ENCODE measurements at regions of chr14 and their contacts with region 1.

Region 1: DNA sequence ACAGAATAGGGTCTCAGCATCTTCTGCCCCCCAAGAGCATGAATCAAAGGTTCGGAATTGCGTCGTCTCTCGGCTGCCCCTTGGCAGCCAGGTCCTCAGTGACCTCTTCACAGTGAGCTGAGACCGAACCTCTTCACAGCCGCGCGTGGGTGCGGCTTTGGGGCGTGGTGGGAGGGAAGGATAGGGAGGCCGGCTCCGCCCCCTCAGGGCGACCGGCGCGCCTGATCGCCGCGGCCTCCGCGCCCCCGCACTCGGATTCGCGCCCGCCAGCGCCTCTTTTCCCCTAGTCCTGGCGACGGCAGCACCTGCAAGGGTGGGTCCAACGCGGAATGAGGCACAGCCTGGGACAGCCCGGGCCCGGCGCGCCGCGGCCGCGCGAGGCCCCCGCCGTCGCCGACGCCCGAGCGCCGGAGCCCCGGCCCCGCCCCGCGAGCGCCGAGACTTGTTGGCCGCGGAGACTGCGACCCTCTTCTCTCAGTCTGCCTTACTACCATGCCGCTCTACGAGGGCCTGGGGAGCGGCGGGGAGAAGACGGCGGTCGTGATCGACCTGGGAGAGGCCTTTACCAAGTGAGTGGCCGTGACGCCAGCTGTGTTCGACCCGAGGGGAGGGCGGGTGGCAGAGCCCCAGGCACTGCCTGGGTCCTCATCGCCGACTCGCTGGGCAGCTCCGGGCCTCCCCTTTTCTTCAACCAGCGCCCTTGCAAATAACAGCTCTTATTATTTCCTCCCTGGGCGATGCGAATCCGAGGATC is at the start of gene ACTR10:
- DNase-seq: peak; percentile 36 to 90
- H3K4me3 ChIP-seq: peak within 1 kb of the TSS; percentile 83 to 95
- H3K27ac ChIP-seq: peak within 1 kb of the TSS; percentile 94 to 95
- H3K4me1 ChIP-seq: peaks cover 3 to 17% of the 10 kb centered on the region in 2 donors
- H3K27me3 ChIP-seq: no peaks in the 10 kb centered on the region
- CTCF ChIP-seq: no peak
- total RNA-seq, gene ACTR10: 32.2 TPM

Region 2: DNA sequence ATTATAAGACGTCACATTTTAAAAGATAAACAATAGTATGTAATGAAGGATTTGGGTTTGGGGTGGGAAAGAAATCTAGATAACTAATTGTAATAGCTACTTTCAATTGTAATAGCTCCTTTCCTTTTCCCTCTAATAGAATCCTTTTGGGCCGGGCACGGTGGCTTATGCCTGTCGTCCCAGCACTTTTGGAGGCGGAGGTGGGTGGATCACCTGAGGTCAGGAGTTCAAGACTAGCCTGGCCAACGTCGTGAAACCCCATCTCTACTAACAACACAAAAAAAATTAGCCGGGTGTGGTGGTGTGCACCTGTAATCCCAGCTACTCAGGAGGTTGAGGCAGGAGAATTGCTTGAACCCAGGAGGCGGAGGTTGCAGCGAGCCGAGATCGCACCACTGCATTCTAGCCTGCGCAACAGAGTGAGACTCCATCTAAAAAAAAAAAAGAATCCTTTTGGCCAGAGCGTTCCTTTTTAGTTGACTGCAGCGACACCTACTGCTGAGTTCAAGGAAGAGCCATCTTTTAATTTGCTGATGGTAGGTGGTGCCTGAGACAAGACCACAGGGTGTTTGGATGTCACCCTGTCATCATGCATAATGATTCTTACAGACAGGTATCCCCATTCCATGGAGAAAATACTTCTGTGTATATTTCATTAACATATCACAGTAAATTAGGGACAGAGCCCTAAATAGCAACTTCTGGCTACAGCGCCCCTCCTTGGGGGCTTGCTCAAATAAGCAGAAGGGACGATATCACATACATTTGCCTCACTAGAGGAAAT is 127.4 kb before region 1 on chr14:
- intact Hi-C with region 1: no loop called
- DNase-seq: no peak
- H3K4me3 ChIP-seq: peak overlapping the region in 1 of 2 donors; percentile 42
- H3K27ac ChIP-seq: no peak overlapping the region
- H3K4me1 ChIP-seq: peaks cover 2 to 8% of the 10 kb centered on the region in 2 donors
- H3K27me3 ChIP-seq: no peaks in the 10 kb centered on the region
- CTCF ChIP-seq: peak; percentile 56 to 81 (median 76)

Region 3: DNA sequence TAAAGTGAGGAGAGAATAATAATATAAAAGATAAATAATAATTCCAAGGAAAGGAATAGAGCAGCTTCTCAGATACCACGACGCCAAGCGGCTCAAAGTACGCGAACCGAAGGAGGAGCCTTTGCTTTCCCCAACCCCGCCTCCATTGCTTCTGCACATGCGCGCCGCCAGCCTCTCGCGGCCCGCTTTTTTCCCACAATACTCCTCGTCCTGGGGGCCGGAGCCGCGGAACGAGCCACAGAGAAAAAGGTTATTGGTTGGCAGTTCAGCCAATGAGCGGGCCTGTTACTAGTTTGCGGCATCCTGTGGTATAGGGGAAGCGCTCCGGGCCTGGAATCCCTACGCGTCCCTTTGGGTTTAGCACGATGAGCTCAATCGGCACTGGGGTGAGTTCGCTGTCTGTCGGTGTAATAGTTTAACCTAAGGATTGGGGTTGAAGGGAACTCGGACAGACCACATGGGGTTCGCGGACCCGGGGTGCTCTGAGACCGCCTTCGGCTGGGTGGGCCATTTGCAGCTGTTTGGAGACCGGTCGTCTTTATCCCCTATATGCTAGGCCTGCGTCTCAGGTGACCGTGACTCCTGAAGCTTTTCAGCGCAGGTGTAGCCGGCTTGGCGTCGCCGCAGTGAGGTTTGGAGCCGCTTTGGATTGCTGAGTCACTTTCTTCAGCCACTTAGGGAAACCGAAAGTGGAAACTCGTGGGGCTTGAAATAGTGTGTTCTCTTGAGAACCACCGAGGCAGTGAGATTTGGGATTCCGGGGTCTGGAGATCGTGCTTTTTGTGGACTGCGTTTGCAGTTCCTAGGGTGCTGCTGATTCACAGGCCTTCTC is 44.9 kb after region 1 on chr14 and contains the start of gene PSMA3:
- intact Hi-C with region 1: loop called (anchors 5 kb)
- DNase-seq: peak; percentile 94 to 99
- H3K4me3 ChIP-seq: peak within 1 kb of the TSS; percentile 59 to 87
- H3K27ac ChIP-seq: peak within 1 kb of the TSS; percentile 87 to 96
- H3K4me1 ChIP-seq: peaks cover 2 to 16% of the 10 kb centered on the region in 2 donors
- H3K27me3 ChIP-seq: no peaks in the 10 kb centered on the region
- CTCF ChIP-seq: no peak
- total RNA-seq, gene PSMA3: 83.3 TPM